IMR-90 (cell line): ENCODE measurements at regions of chr20 and their contacts with region 1.

Region 1: DNA sequence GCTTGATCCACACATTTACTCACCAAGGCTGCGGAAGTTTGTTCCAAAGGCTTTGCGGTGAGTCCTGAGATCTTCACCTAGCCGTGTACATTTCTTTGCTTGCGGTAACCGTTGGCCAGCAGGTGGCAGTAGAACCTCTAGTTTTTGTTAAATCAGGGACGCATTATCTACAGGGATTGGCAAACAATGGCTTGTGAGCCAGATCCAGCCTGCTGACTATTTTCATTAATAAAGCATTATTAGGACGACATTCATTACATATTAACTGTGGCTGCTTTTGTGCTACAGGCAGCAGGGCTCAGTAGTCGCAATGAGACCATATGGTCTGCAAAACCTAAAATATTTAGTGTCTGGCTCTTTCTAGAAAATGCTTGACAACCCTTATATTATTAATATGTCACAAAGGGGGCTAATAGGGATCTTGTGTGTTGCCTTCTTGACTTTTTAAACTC is 174.1 kb downstream of the DOK5 start:
- DNase-seq: peak; percentile 67
- ATAC-seq: peak; percentile 87
- H3K4me3 ChIP-seq: no peak overlapping the region
- H3K27ac ChIP-seq: no peak overlapping the region
- H3K4me1 ChIP-seq: no peaks in the 10 kb centered on the region
- H3K27me3 ChIP-seq: no peaks in the 10 kb centered on the region
- CTCF ChIP-seq: peak; percentile 71
- POLR2A ChIP-seq: no peak
- RAD21 ChIP-seq: peak; percentile 51

Region 2: GRCh38 chr20:54097236-54097529 is 552.4 kb before region 1 on chr20:
- CTCF ChIA-PET with region 1: no interaction called
- POLR2A ChIA-PET with region 1: no interaction called
- dilution Hi-C with region 1: no loop called
- in situ Hi-C with region 1: no loop called
- intact Hi-C with region 1: loop called (anchors 2 kb)
- DNase-seq: no peak
- ATAC-seq: no peak
- H3K4me3 ChIP-seq: no peak overlapping the region
- H3K27ac ChIP-seq: no peak overlapping the region
- H3K4me1 ChIP-seq: no peaks in the 10 kb centered on the region
- H3K27me3 ChIP-seq: peaks cover 7% of the 10 kb centered on the region; the same call in 1 of the 2 replicates
- CTCF ChIP-seq: no peak
- POLR2A ChIP-seq: no peak
- RAD21 ChIP-seq: no peak

Region 3: GRCh38 chr20:54219751-54220426 is 429.6 kb before region 1 on chr20:
- CTCF ChIA-PET with region 1: interaction called, 7 read pairs
- POLR2A ChIA-PET with region 1: interaction called, 3 read pairs
- dilution Hi-C with region 1: no loop called
- in situ Hi-C with region 1: loop called (anchors 5 kb)
- intact Hi-C with region 1: loop called (anchors 1 kb)
- DNase-seq: peak; percentile 63
- ATAC-seq: peak; percentile 57; the same call in 1 of the 2 replicates
- H3K4me3 ChIP-seq: no peak overlapping the region
- H3K27ac ChIP-seq: no peak overlapping the region
- H3K4me1 ChIP-seq: 0 out of 2 replicates have a peak, but pooled peaks cover 3% of the 10 kb centered on the region
- H3K27me3 ChIP-seq: no peaks in the 10 kb centered on the region
- CTCF ChIP-seq: peak; percentile 76
- POLR2A ChIP-seq: no peak
- RAD21 ChIP-seq: peak; percentile 81

Region 4: DNA sequence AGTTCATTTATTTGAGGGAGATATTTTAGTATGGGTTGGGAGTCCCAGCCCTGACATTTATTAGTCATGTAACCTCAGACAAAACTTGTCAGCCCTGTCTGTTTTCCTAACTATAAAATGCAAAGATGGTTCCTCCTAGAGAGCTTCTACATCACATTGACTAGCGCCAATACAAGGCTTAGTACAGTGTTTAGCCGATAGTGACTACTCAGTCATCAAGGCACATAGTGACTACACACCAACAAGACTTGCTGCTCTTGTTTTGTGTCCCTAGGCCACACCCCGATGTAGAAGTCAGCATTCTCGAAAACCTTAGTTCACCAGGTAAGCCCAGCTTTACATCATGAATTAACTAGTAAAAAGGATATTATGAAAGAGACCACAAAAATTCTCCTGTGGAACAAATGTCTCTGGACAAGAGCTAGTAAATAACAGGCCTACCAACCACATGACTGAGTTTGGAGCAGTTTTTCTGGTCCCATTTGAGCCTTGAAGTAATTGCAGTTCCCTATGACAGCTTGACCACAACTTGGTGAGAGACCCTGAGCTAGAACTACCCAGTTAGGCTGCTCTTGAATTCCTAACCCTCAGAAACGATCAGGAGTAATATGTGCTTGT is 372.9 kb before region 1 on chr20:
- CTCF ChIA-PET with region 1: no interaction called
- POLR2A ChIA-PET with region 1: no interaction called
- dilution Hi-C with region 1: no loop called
- in situ Hi-C with region 1: no loop called
- intact Hi-C with region 1: no loop called
- DNase-seq: no peak
- ATAC-seq: no peak
- H3K4me3 ChIP-seq: no peak overlapping the region
- H3K27ac ChIP-seq: no peak overlapping the region
- H3K4me1 ChIP-seq: no peaks in the 10 kb centered on the region
- H3K27me3 ChIP-seq: no peaks in the 10 kb centered on the region
- CTCF ChIP-seq: no peak
- POLR2A ChIP-seq: no peak
- RAD21 ChIP-seq: no peak

Region 5: GRCh38 chr20:54475334-54476168 is 174.0 kb before region 1 on chr20 and contains the start of gene DOK5:
- CTCF ChIA-PET with region 1: no interaction called
- POLR2A ChIA-PET with region 1: no interaction called
- dilution Hi-C with region 1: no loop called
- in situ Hi-C with region 1: no loop called
- intact Hi-C with region 1: loop called (anchors 10 kb)
- DNase-seq: peak; percentile 12
- ATAC-seq: peak; percentile 93
- H3K4me3 ChIP-seq: peak within 1 kb of the TSS; percentile 67
- H3K27ac ChIP-seq: no peak within 1 kb of the TSS
- H3K4me1 ChIP-seq: no peaks in the 10 kb centered on the region
- H3K27me3 ChIP-seq: peaks cover 10% of the 10 kb centered on the region
- CTCF ChIP-seq: no peak
- POLR2A ChIP-seq: no peak
- RAD21 ChIP-seq: no peak
- total RNA-seq, gene DOK5: 3.9 and 4.2 TPM in 2 replicates

Region 6: GRCh38 chr20:56343861-56344381 is 1694.4 kb after region 1 on chr20:
- CTCF ChIA-PET with region 1: no interaction called
- POLR2A ChIA-PET with region 1: no interaction called
- dilution Hi-C with region 1: no loop called
- in situ Hi-C with region 1: no loop called
- intact Hi-C with region 1: loop called (anchors 10 kb)
- DNase-seq: peak; percentile 24
- ATAC-seq: peak; percentile 98
- H3K4me3 ChIP-seq: 0 out of 2 replicates have a peak overlapping the region, but pooled peaks have one; percentile 15
- H3K27ac ChIP-seq: no peak overlapping the region
- H3K4me1 ChIP-seq: no peaks in the 10 kb centered on the region
- H3K27me3 ChIP-seq: peaks cover 25% of the 10 kb centered on the region
- CTCF ChIP-seq: peak; percentile 59
- POLR2A ChIP-seq: no peak
- RAD21 ChIP-seq: peak; percentile 71